ENCODE measurements at regions of chr4 and their contacts with region 1.

Region 1: GRCh38 chr4:55546756-55547465 is at the start of gene CLOCK:
- DNase-seq: peak; percentile 88
- ATAC-seq: peak; percentile 76
- H3K4me3 Mint-ChIP-seq: peak within 1 kb of the TSS; percentile 92
- H3K27ac Mint-ChIP-seq: peak within 1 kb of the TSS; percentile 90
- H3K4me1 Mint-ChIP-seq: peaks cover 29% of the 10 kb centered on the region
- H3K27me3 Mint-ChIP-seq: peaks cover 6% of the 10 kb centered on the region
- CTCF ChIP-seq: no peak
- total RNA-seq, gene CLOCK: 10.4 and 12.9 TPM in 2 replicates

Region 2: GRCh38 chr4:55395529-55396307 is 151.2 kb before region 1 on chr4 and contains the start of gene TMEM165:
- CTCF ChIA-PET with region 1: interaction called, 3 read pairs
- POLR2A ChIA-PET with region 1: interaction called, 35 read pairs
- intact Hi-C with region 1: loop called (anchors 1 kb)
- DNase-seq: peak; percentile 89
- ATAC-seq: peak; percentile 92
- H3K4me3 Mint-ChIP-seq: peak within 1 kb of the TSS; percentile 91
- H3K27ac Mint-ChIP-seq: peak within 1 kb of the TSS; percentile 95
- H3K4me1 Mint-ChIP-seq: peaks cover 42% of the 10 kb centered on the region
- H3K27me3 Mint-ChIP-seq: no peaks in the 10 kb centered on the region
- CTCF ChIP-seq: no peak
- total RNA-seq, gene TMEM165: 80.3 and 90.2 TPM in 2 replicates

Region 3: DNA sequence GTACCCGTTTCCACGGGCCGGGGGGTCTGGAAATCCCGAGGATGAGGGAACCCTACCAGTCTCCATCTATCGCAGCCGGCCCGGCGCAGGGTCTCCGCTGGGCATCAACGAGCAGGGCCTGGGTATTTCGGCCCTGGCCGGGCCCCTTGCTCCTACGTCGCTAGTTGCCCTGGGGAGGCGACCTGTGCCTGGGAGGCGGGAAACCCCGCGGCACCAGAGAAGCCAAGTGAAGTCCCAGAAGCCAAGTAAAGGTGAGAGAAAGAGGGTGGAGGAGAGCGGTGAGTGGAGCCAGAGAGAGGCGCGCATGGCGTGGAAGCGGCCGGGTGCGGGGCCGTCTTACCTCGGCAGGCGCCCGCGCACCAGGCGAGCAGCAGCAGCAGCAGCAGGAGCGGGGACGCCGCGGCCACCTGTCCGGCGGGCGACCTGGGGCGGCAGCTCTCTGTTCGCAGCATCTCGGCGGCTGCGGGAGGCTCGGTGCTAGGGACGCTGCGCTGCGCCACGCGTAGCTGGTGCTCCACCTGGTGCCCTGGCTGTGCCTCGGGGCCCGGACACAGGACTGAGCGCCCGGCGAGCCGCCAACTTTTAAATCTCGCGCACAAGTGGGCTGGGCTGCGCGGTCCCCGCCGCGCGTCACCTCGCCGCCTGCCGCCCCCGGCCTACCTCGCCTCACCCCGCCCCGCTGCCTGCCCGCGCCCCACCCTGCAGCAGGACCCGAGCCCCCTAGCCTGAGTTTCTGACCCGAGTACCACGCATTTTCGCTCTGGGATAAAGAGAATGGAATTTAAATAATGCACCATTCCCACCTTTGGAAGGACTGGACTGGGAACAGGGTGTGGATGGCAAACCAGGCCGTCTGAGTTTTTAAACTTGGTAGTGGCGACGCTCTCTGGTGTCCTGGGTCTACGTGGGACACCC is 89.1 kb after region 1 on chr4 and contains the start of gene NMU:
- CTCF ChIA-PET with region 1: no interaction called
- POLR2A ChIA-PET with region 1: no interaction called
- intact Hi-C with region 1: loop called (anchors 10 kb)
- DNase-seq: peak; percentile 20
- ATAC-seq: peak; percentile 70
- H3K4me3 Mint-ChIP-seq: peak within 1 kb of the TSS; percentile 73
- H3K27ac Mint-ChIP-seq: no peak within 1 kb of the TSS
- H3K4me1 Mint-ChIP-seq: peaks cover 15% of the 10 kb centered on the region
- H3K27me3 Mint-ChIP-seq: peaks cover 36% of the 10 kb centered on the region
- CTCF ChIP-seq: no peak
- total RNA-seq, gene NMU: not detected in 2 replicates

Region 4: GRCh38 chr4:55866973-55867574 is 320.2 kb after region 1 on chr4:
- CTCF ChIA-PET with region 1: no interaction called
- POLR2A ChIA-PET with region 1: no interaction called
- intact Hi-C with region 1: loop called (anchors 2 kb)
- DNase-seq: no peak
- ATAC-seq: peak; percentile 84
- H3K4me3 Mint-ChIP-seq: no peak overlapping the region
- H3K27ac Mint-ChIP-seq: no peak overlapping the region
- H3K4me1 Mint-ChIP-seq: peaks cover 22% of the 10 kb centered on the region
- H3K27me3 Mint-ChIP-seq: no peaks in the 10 kb centered on the region
- CTCF ChIP-seq: no peak

Region 5: DNA sequence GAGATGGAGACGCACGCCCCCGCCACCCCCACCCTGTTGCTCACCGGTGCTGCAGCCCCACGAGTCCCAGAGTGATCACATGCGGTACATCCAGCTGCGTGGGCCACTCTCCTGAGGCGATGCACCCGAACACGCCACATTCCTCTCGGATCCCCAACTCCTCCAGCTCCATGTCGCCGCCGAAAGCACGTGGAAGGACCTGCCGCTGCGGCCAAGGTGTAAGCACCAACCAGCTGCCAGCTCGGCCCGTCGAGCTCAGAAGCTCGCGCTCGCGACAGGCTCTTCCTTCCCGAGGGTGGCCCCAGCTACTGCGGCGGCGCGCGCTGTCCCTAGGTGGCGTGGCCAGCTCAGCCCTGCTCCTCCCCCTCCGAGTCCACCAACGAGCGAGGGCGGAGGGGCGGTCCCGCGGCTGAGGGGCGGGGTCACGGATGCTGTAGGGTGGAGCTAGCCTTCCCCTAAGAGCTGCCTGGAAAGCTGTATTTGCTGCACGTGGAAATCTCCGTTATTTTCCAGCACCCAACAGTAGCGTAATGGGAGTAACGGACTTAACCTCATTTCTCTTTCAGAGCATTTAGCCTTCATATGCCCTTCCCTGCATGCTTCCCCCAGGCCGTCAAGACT is 888.5 kb after region 1 on chr4 and contains the start of gene PPAT:
- CTCF ChIA-PET with region 1: no interaction called
- POLR2A ChIA-PET with region 1: interaction called, 5 read pairs
- intact Hi-C with region 1: loop called (anchors 2 kb)
- DNase-seq: peak; percentile 98
- ATAC-seq: peak; percentile 86
- H3K4me3 Mint-ChIP-seq: peak within 1 kb of the TSS; percentile 90
- H3K27ac Mint-ChIP-seq: peak within 1 kb of the TSS; percentile 97
- H3K4me1 Mint-ChIP-seq: peaks cover 37% of the 10 kb centered on the region
- H3K27me3 Mint-ChIP-seq: no peaks in the 10 kb centered on the region
- CTCF ChIP-seq: no peak
- total RNA-seq, gene PPAT: 11.7 and 12.9 TPM in 2 replicates

Measured in activated B cell treated with CpG ODN at 0.5 μM for 24 hours (primary cell).